Activated T-helper 2 cell treated with anti-CD3 and anti-CD28 coated beads, Interferon-gamma antibody, Interleukin-2, Interleukin-4, amounts not matched to agents 10 μg/mL and 5 μg/mL and 100 μg/mL, durations not matched to agents 14 hours and 24 hours and 36 hours (primary cell): ENCODE measurements at regions of chr2 and their contacts with region 1.

Region 1: GRCh38 chr2:28276076-28276618 is 116.5 kb upstream of the FOSL2 start:
- DNase-seq: no peak
- H3K4me3 Mint-ChIP-seq: no peak overlapping the region
- H3K27ac Mint-ChIP-seq: peak overlapping the region; percentile 41
- H3K4me1 Mint-ChIP-seq: peaks cover 48% of the 10 kb centered on the region
- H3K27me3 Mint-ChIP-seq: no peaks in the 10 kb centered on the region

Region 2: DNA sequence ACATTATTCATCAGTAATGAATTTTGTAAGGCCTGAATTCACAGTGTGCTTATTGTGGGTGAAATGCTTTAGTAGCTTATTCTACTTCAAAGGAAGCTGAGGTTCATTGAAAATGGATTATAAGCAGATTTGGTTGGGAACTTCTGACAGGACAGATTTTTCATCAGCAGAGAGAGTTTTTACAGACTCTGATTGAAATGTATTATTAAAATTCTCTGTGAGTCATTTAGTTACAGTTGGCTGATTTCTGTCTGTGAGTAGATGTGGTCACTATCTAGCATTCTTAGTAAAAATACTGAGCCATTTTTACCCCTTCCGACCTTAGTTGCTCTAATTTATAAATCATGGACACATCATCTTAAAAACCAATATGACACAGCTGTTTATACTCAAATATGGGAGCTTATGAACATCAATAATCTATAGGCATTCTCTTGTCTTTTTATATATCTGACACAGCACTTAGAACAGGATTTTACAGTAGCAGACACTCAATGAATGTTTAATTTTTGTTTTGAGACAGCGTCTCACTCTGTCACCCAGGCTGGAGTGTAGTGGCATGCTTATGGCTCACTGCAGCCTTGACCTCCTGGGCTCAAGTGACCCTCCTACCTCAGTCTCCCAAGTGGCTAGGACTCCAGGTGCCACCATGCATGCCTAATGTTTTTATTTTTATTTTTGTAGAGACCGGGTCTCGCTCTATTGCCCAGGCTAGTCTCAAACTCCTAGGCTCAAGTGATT is 146.0 kb before region 1 on chr2:
- intact Hi-C with region 1: no loop called
- DNase-seq: no peak
- H3K4me3 Mint-ChIP-seq: no peak overlapping the region
- H3K27ac Mint-ChIP-seq: no peak overlapping the region
- H3K4me1 Mint-ChIP-seq: peaks cover 14% of the 10 kb centered on the region
- H3K27me3 Mint-ChIP-seq: no peaks in the 10 kb centered on the region

Region 3: DNA sequence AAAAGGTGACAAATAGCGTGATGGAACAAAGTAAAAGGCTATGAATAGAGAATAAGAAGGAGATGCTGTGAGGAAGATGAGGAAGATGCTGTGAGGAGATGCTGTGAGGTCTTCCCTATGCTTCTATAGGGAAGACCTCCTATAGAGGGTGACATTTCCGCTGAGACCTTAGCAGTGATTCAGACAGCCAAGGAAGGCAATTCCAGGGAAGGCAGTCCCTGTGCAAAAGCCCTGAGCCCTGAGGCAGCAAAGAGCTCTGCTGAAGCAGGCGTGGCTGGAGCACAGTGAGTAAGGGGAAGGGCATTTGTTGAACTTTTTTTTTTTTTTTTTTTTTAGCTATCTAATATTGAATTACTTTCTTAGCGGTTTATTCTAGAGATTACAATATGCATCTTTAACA is 26.1 kb before region 1 on chr2:
- intact Hi-C with region 1: loop called (anchors 1 kb)
- DNase-seq: no peak
- H3K4me3 Mint-ChIP-seq: no peak overlapping the region
- H3K27ac Mint-ChIP-seq: no peak overlapping the region
- H3K4me1 Mint-ChIP-seq: peaks cover 38% of the 10 kb centered on the region
- H3K27me3 Mint-ChIP-seq: no peaks in the 10 kb centered on the region